PC-3 (cell line): ENCODE measurements at regions of chr11 and their contacts with region 1.

Region 1: DNA sequence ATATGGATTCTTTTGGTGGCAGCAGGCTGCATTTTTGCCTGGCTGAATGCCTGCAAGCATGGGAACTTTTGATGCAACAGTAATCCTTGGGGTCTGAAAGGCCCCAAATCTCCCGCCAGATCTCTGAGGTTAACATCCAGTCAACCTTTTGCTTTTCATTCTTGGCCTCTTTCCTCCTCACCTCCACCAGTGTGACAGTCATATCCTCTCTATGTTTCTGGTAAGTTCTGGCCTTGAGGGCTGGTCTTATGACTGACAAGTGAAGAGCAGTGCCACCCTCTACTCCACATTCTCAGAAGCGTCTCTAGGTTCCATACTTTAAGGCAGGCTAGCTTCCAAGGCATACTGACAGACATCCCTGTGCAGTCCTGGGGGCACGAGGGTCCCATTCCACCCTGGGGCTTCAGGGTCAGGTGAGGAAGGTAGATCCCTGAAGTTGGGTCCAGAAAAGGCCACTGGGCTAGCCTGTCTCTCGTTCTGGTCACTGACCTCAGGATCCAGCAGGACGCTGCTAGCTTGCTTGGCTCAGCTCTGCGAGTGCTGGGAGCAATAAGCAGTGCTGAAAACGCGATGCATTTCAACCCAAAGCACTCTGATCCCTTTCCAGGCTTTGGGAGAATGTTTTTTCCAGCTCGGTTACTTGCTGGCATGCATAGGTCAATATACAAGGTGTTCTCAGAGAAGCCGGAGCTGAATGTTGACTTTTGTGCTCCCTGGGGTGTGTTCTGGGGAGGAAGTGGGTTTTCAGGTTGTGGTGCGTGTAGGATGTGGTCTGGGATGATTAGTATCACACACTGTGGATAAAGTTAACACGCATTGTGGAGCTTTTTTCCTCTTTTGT is 75.2 kb downstream of the PTPRJ start:
- DNase-seq: peak; percentile 96
- ATAC-seq: peak; percentile 92
- H3K4me3 ChIP-seq: peak overlapping the region; percentile 53
- H3K27ac ChIP-seq: peak overlapping the region; percentile 100
- H3K4me1 ChIP-seq: peaks cover 60% of the 10 kb centered on the region
- H3K27me3 ChIP-seq: no peaks in the 10 kb centered on the region
- CTCF ChIP-seq: no peak

Region 2: DNA sequence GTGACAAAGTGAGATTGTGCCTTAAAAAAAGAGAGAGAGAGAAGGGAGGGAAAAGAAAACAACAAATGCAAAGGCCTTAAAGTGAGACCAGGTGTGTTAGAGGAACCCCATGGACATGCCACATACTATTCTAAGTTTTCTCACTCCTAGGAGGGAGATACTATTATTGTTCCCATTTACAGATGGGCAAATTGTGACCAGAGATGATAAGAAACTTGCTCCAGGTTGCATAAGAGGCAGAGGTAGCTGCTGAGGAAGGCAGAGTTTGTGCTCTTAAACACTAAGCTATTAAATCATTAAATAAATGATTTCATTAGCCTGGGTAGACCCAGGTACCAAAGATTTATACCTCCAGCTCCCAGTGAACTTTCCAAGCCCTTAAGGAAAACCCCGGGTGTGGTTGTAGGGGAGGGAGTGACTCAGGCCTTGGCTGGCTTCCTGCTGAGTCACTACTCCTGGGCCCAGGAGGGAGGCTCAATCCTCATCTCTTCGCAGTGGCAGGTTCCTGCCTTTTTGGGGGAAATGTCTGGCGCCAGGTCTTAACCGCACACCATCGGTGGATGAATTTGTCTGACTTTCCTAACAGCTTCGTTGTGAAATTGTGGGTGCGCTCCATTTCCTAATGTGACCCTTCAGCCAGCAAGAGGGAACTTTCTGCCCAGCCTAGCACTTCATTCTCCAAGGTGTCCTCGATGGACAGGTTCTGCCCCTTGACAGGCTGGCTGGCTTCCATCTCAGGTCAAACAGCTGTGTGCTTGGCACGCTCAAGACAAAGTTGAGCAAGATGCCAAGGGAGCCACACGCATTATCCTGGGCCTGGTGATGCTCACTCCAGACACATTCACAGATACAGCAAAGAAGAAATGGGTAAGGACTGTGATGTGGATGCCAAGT is 108.6 kb before region 1 on chr11:
- CTCF ChIA-PET with region 1: no interaction called
- POLR2A ChIA-PET with region 1: no interaction called
- intact Hi-C with region 1: loop called (anchors 5 kb)
- DNase-seq: peak; percentile 98
- ATAC-seq: peak; percentile 96
- H3K4me3 ChIP-seq: peak overlapping the region; percentile 44; the same call in 1 of the 2 replicates
- H3K27ac ChIP-seq: peak overlapping the region; percentile 97
- H3K4me1 ChIP-seq: peaks cover 38% of the 10 kb centered on the region
- H3K27me3 ChIP-seq: no peaks in the 10 kb centered on the region
- CTCF ChIP-seq: no peak

Region 3: GRCh38 chr11:47980245-47981049 is 75.1 kb before region 1 on chr11 and contains the start of gene PTPRJ:
- CTCF ChIA-PET with region 1: no interaction called
- POLR2A ChIA-PET with region 1: interaction called, 23 read pairs
- intact Hi-C with region 1: loop called (anchors 2 kb)
- DNase-seq: peak; percentile 49
- ATAC-seq: peak; percentile 49
- H3K4me3 ChIP-seq: peak within 1 kb of the TSS; percentile 86
- H3K27ac ChIP-seq: no peak within 1 kb of the TSS
- H3K4me1 ChIP-seq: peaks cover 26% of the 10 kb centered on the region
- H3K27me3 ChIP-seq: no peaks in the 10 kb centered on the region
- CTCF ChIP-seq: no peak
- total RNA-seq, gene PTPRJ: 10.5 and 12.8 TPM in 2 replicates

Region 4: GRCh38 chr11:48006301-48006992 is 49.1 kb before region 1 on chr11:
- CTCF ChIA-PET with region 1: no interaction called
- POLR2A ChIA-PET with region 1: interaction called, 4 read pairs
- intact Hi-C with region 1: loop called (anchors 2 kb)
- DNase-seq: peak; percentile 74
- ATAC-seq: peak; percentile 77
- H3K4me3 ChIP-seq: peak overlapping the region; percentile 25; the same call in 1 of the 2 replicates
- H3K27ac ChIP-seq: peak overlapping the region; percentile 94
- H3K4me1 ChIP-seq: peaks cover 36% of the 10 kb centered on the region
- H3K27me3 ChIP-seq: no peaks in the 10 kb centered on the region
- CTCF ChIP-seq: no peak

Region 5: DNA sequence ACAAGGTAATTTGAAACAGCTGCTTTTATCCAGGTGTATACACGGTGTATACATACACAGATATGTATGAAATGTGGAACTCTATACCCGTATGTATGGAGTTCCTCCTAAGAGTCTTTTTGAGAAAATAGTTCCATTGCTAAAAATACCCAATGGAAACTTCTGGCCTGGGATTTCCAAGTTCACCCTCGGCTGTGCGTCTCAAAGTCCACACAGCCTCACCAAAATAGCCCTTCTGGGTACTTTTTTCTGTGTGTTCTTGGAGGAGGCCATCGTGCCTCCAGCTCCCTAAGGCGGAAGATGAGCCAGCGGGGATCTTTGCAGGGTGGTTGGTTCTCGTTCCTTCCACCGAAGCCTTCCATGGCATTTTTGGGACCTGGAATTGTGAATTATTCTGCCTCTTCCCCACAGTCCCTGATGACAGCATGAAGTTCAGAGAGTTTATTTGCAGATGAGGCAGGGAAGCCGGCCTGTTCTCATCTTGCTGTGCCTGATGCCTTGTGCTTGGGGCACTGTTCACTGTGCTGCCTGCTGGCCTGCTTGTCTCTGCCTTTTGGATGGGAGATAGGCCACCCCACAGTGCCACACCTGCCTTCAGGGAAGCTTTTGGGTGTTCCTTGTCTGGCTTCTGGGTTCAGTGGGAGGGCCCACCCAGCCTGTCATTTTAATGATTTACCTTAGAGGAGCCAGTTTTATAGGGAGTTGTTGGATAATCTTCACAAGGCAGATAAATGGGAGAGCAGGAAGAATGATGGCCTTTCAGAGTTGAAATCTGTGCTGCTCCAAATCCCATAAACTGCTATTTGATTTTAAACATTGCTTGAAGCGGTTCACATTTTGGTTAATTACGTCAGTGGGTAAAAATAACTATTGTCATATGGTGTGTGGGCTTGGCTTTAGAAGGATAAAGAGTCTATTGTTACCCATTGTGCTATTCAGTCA is 48.4 kb after region 1 on chr11:
- CTCF ChIA-PET with region 1: interaction called, 5 read pairs
- POLR2A ChIA-PET with region 1: no interaction called
- intact Hi-C with region 1: loop called (anchors 1 kb)
- DNase-seq: peak; percentile 32
- ATAC-seq: peak; percentile 58
- H3K4me3 ChIP-seq: no peak overlapping the region
- H3K27ac ChIP-seq: peak overlapping the region; percentile 77
- H3K4me1 ChIP-seq: peaks cover 22% of the 10 kb centered on the region
- H3K27me3 ChIP-seq: no peaks in the 10 kb centered on the region
- CTCF ChIP-seq: no peak